Prostate gland (tissue), 2 donors: ENCODE measurements at regions of chr17 and their contacts with region 1.

Region 1: DNA sequence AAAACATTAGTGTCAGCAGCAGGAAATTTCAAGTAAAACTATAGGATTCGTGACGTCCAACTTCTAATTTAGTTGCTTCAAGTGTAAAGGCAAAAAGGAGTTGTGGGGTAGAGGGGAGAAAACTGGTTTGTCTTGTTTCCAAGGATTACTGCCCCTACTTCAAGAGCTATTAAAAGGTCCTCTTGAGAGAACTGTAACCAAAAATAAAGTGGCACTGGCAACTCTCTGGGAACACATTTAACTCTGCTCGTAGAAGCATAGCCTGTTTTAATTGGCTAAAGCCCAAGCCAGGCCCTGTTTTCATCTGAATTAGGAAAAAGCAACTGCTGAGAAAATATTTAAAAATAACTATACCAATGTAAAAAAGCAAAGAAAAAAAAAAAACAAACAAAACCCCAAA is 51.8 kb upstream of the AKAP1 start:
- DNase-seq: peak; percentile 72
- H3K4me3 ChIP-seq: no peak overlapping the region
- H3K27ac ChIP-seq: peak overlapping the region; percentile 79 to 89
- H3K4me1 ChIP-seq: peaks cover 27% of the 10 kb centered on the region
- H3K27me3 ChIP-seq: no peaks in the 10 kb centered on the region
- CTCF ChIP-seq: no peak
- POLR2A ChIP-seq: no peak

Region 2: GRCh38 chr17:56833057-56833808 is 200.1 kb before region 1 on chr17:
- intact Hi-C with region 1: no loop called
- DNase-seq: peak; percentile 25
- H3K4me3 ChIP-seq: peak overlapping the region; percentile 67 to 79
- H3K27ac ChIP-seq: peak overlapping the region; percentile 91 to 95
- H3K4me1 ChIP-seq: no peaks in the 10 kb centered on the region
- H3K27me3 ChIP-seq: no peaks in the 10 kb centered on the region
- CTCF ChIP-seq: peak in 1 of 4 experiments; percentile 18
- POLR2A ChIP-seq: peak; percentile 12

Region 3: GRCh38 chr17:57084802-57085447 is 51.6 kb after region 1 on chr17 and contains the start of gene AKAP1:
- intact Hi-C with region 1: loop called (anchors 5 kb)
- DNase-seq: peak; percentile 94
- H3K4me3 ChIP-seq: peak within 1 kb of the TSS; percentile 71 to 89
- H3K27ac ChIP-seq: peak within 1 kb of the TSS; percentile 93 to 97
- H3K4me1 ChIP-seq: peaks cover 5% of the 10 kb centered on the region
- H3K27me3 ChIP-seq: no peaks in the 10 kb centered on the region
- CTCF ChIP-seq: peak in 3 of 4 experiments; percentile 37 to 74 (median 63)
- POLR2A ChIP-seq: peak; percentile 92
- total RNA-seq, gene AKAP1: 61.7 to 124 TPM